Dendritic cell treated with granulocyte-macrophage colony-stimulating factor and Interleukin-4, amounts not matched to agents 40 ng/mL and 50 ng/mL, for 4 days (primary cell): ENCODE measurements at regions of chr5 and their contacts with region 1.

Region 1: DNA sequence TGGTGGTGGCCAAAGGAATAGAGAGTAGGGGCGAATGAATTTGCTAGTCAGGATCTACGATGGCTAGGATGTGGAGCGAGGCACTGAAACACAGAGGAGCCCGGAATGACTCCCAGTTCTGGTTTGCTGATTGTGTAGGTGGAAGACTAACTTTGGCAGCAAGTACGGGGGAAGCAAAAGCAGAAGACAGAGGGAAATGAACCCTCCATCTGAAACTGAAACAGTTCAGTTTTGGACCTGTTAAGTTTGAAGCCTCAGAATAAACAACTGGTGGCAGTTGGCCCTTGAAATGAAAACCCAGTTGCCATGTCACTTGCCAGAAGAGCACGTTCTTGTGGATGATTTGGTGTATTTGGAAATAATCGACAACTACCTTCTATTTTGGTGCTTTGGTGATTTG is 15.4 kb upstream of the SMIM15 start:
- H3K4me3 Mint-ChIP-seq: no peak overlapping the region
- H3K27ac Mint-ChIP-seq: no peak overlapping the region
- H3K4me1 Mint-ChIP-seq: peaks cover 31% of the 10 kb centered on the region
- H3K27me3 Mint-ChIP-seq: no peaks in the 10 kb centered on the region

Region 2: DNA sequence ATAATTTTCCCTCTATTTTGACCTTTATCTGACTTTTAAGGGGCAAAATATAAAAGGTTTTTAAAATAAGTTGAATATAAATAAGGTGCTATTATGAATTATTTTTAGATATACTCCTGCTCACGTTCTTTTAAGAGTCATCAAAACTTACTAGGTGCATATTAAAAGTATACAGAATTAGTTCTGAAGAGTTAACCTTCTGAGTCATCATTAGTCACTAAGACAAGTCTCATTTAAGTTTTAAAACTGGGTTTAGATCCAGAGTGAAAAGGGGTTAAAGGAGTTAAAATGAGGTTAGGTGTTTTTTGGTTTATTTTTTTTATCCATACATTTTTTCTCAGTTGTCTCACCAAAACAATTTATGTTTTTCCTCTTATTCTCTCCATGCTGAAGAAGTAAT is 57.2 kb before region 1 on chr5:
- intact Hi-C with region 1: no loop called
- H3K4me3 Mint-ChIP-seq: no peak overlapping the region
- H3K27ac Mint-ChIP-seq: no peak overlapping the region
- H3K4me1 Mint-ChIP-seq: no peaks in the 10 kb centered on the region
- H3K27me3 Mint-ChIP-seq: no peaks in the 10 kb centered on the region

Region 3: GRCh38 chr5:61228691-61229280 is 51.1 kb after region 1 on chr5:
- intact Hi-C with region 1: loop called (anchors 10 kb)
- H3K4me3 Mint-ChIP-seq: no peak overlapping the region
- H3K27ac Mint-ChIP-seq: no peak overlapping the region
- H3K4me1 Mint-ChIP-seq: peaks cover 14% of the 10 kb centered on the region
- H3K27me3 Mint-ChIP-seq: peaks cover 3% of the 10 kb centered on the region